MCF 10A (cell line): ENCODE measurements at regions of chrX and their contacts with region 1.

Region 1: DNA sequence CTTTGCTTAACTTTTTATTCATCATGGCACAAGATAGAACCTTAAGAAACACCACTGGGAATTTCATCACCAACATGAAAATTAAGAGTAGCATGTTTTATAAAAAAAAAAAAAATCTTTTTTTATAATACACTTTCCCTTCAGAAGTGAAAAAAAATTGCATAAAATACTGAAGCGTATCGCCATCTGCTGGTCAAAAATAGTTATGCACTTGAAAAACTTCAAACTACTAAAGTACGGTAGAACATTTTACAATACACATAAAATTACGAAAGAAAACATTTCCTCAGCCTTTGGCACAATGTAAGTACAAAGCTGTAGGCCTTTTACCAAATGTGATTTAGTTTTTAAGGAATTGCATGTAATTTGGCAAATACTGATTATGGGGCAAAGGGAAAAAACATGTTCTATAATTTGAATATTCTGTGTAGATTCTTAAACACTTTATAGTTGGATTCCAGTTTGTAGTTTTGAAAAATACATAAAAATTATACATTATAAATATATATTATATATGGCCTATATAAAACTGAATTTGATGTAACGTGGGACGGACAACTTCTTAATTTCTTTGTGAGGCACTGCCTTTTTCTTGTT is 26.5 kb downstream of the HCCS start:
- DNase-seq: peak; percentile 49
- H3K4me3 Mint-ChIP-seq: no peak overlapping the region
- H3K27ac Mint-ChIP-seq: no peak overlapping the region
- H3K4me1 Mint-ChIP-seq: no peaks in the 10 kb centered on the region
- H3K27me3 Mint-ChIP-seq: peaks cover 32% of the 10 kb centered on the region
- CTCF ChIP-seq: peak; percentile 49

Region 2: GRCh38 chrX:10433296-10433965 is 704.2 kb before region 1 on chrX:
- CTCF ChIA-PET with region 1: no interaction called
- POLR2A ChIA-PET with region 1: no interaction called
- intact Hi-C with region 1: no loop called
- DNase-seq: no peak
- H3K4me3 Mint-ChIP-seq: no peak overlapping the region
- H3K27ac Mint-ChIP-seq: no peak overlapping the region
- H3K4me1 Mint-ChIP-seq: no peaks in the 10 kb centered on the region
- H3K27me3 Mint-ChIP-seq: no peaks in the 10 kb centered on the region
- CTCF ChIP-seq: no peak

Region 3: GRCh38 chrX:11119313-11119943 is 18.2 kb before region 1 on chrX:
- CTCF ChIA-PET with region 1: interaction called, 10 read pairs
- POLR2A ChIA-PET with region 1: no interaction called
- intact Hi-C with region 1: no loop called
- DNase-seq: no peak
- H3K4me3 Mint-ChIP-seq: no peak overlapping the region
- H3K27ac Mint-ChIP-seq: no peak overlapping the region
- H3K4me1 Mint-ChIP-seq: no peaks in the 10 kb centered on the region
- H3K27me3 Mint-ChIP-seq: peaks cover 3% of the 10 kb centered on the region
- CTCF ChIP-seq: no peak

Region 4: DNA sequence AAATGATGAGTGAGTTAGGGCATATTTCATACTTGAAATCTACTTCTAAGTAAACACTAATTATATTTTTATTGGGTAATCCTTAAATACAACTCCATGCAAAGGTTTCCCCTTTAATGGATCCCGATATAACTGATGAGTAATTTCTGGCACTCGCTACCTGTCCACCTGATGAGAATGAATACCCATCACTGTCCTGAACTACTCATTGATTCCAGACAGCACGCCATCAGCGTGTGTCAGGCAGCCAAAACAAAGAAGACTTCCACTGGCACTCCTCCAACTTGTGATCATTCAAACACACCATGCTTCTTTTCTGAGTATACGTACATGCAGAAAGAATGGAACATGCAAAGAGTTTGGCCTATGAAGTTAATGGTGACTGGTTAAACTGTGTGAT is 42.9 kb after region 1 on chrX:
- CTCF ChIA-PET with region 1: no interaction called
- POLR2A ChIA-PET with region 1: no interaction called
- intact Hi-C with region 1: no loop called
- DNase-seq: peak; percentile 11
- H3K4me3 Mint-ChIP-seq: no peak overlapping the region
- H3K27ac Mint-ChIP-seq: no peak overlapping the region
- H3K4me1 Mint-ChIP-seq: no peaks in the 10 kb centered on the region
- H3K27me3 Mint-ChIP-seq: peaks cover 30% of the 10 kb centered on the region
- CTCF ChIP-seq: no peak

Region 5: DNA sequence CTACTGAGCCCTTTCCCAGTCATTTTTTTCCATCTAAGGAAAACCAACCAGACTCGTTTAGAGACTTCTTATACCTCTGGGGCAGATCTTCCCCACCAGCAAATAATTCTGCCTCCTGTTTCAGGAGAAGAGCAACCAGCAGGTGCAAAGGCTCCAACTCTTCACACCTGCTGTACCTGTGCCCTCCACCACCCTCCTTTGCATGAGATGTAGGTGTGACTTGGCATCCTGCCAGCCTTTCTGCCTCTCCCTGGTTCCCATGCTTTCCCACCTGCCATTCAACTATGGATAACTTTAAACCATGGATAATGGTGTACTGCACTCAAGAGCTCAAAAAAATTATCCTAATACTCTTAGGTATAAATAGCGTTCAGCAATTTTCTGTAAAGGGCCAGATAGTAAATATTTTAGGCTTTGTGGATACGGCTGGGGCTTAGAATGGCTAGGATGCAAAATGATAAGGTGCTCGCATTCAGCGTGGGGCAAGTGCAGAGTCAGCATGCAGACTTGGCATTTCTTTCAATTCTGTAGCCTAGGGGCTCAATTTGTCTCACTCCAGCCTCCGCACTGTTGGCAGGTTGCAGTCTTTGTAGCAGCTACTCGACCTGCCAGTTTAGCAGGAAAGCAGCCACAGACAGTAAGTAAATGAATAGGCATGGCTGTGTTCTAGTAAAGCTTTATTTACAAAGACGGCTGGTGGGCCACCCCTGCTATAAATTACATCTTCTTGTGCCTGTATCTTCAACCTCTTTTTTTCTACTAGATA is 53.3 kb after region 1 on chrX:
- CTCF ChIA-PET with region 1: no interaction called
- POLR2A ChIA-PET with region 1: no interaction called
- intact Hi-C with region 1: no loop called
- DNase-seq: peak; percentile 34
- H3K4me3 Mint-ChIP-seq: no peak overlapping the region
- H3K27ac Mint-ChIP-seq: no peak overlapping the region
- H3K4me1 Mint-ChIP-seq: no peaks in the 10 kb centered on the region
- H3K27me3 Mint-ChIP-seq: peaks cover 16% of the 10 kb centered on the region
- CTCF ChIP-seq: no peak